ENCODE measurements at regions of chr2 and their contacts with region 1.

Region 1: DNA sequence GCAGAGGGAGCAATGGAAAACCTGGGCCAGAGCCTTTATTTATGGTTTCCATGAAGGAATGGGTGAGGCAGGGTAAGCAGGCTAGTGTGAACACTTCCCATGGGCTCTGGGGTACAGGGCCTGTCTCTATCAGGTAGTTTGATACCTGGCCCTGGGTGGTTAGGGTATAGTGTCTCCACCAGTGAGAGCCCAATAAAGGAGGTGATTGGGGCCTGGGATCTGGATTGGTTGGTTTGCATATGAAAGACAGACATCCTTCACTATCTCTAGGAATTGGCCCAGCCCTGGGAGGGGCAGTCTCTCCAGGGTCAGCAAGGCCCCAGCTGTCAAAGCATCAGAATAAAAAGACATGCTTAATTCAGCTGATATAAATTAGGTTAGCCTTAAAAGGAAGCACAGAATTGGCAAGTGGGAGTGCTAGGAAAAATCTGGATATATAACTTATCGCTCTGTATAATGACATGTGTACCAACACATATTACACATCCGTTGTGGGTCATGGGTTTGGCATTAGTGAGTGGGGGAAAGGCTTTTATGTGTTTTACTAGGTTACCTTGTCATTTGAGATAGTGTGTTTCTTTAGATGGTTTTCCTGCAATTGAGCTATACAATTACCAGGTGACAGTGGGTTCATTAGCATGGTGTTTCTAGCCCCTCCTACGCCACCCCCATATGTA is 18.5 kb upstream of the TMEM178A start:
- DNase-seq: no peak
- ATAC-seq: no peak
- H3K4me3 ChIP-seq: no peak overlapping the region
- H3K4me3 Mint-ChIP-seq: no peak overlapping the region
- H3K27ac ChIP-seq: no peak overlapping the region
- H3K27ac Mint-ChIP-seq: no peak overlapping the region
- H3K4me1 ChIP-seq: no peaks in the 10 kb centered on the region
- H3K4me1 Mint-ChIP-seq: no peaks in the 10 kb centered on the region
- H3K27me3 ChIP-seq: no peaks in the 10 kb centered on the region
- H3K27me3 Mint-ChIP-seq: no peaks in the 10 kb centered on the region
- CTCF ChIP-seq: no peak

Region 2: DNA sequence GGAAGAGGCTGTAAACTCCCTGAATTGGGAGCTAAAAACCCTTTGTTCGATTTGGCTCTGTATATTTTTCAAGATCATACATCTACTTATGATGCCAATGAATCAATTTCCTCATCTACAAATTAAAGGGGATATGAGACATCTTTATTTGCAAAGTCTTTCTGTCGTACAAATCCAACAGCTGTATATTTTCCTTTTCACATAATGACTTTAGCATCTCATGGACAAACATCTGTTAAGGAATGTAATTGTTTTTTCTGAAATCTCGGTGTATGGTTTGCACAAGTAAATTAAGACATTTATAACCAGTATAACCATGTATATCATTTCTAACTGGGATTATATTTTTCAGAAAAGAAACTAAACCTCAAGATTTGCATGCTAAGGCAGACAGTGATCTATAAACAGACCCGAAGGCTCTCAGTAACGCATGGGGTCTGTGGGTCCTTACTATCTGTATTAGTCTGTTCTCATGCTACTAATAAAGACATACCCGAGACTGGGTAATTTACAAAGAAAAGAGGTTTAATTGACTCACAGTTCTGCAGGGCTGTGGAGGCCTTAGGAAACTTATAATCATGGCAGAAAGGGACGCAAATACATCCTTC is 673.9 kb after region 1 on chr2:
- CTCF ChIA-PET with region 1: no interaction called
- POLR2A ChIA-PET with region 1: no interaction called
- intact Hi-C with region 1: loop called in 1 of 2 experiments (anchors 5 kb)
- DNase-seq: no peak
- ATAC-seq: no peak
- H3K4me3 ChIP-seq: no peak overlapping the region
- H3K4me3 Mint-ChIP-seq: no peak overlapping the region
- H3K27ac ChIP-seq: no peak overlapping the region
- H3K27ac Mint-ChIP-seq: no peak overlapping the region
- H3K4me1 ChIP-seq: no peaks in the 10 kb centered on the region
- H3K4me1 Mint-ChIP-seq: no peaks in the 10 kb centered on the region
- H3K27me3 ChIP-seq: no peaks in the 10 kb centered on the region
- H3K27me3 Mint-ChIP-seq: no peaks in the 10 kb centered on the region
- CTCF ChIP-seq: no peak